ENCODE measurements at regions of chr1 and their contacts with region 1.

Region 1: GRCh38 chr1:152047730-152048402 is 11.1 kb upstream of the S100A11 start:
- DNase-seq: peak; percentile 64 to 94 (median 90)
- ATAC-seq: peak; percentile 89
- H3K4me3 ChIP-seq: peak overlapping the region; percentile 15 to 35
- H3K4me3 Mint-ChIP-seq: peak overlapping the region; percentile 68
- H3K27ac ChIP-seq: peak overlapping the region; percentile 54 to 97
- H3K27ac Mint-ChIP-seq: peak overlapping the region; percentile 98
- H3K4me1 ChIP-seq: peaks cover 20% of the 10 kb centered on the region
- H3K4me1 Mint-ChIP-seq: peaks cover 19% of the 10 kb centered on the region
- H3K27me3 ChIP-seq: no peaks in the 10 kb centered on the region
- H3K27me3 Mint-ChIP-seq: peaks cover 2% of the 10 kb centered on the region
- CTCF ChIP-seq: peak; percentile 43

Region 2: DNA sequence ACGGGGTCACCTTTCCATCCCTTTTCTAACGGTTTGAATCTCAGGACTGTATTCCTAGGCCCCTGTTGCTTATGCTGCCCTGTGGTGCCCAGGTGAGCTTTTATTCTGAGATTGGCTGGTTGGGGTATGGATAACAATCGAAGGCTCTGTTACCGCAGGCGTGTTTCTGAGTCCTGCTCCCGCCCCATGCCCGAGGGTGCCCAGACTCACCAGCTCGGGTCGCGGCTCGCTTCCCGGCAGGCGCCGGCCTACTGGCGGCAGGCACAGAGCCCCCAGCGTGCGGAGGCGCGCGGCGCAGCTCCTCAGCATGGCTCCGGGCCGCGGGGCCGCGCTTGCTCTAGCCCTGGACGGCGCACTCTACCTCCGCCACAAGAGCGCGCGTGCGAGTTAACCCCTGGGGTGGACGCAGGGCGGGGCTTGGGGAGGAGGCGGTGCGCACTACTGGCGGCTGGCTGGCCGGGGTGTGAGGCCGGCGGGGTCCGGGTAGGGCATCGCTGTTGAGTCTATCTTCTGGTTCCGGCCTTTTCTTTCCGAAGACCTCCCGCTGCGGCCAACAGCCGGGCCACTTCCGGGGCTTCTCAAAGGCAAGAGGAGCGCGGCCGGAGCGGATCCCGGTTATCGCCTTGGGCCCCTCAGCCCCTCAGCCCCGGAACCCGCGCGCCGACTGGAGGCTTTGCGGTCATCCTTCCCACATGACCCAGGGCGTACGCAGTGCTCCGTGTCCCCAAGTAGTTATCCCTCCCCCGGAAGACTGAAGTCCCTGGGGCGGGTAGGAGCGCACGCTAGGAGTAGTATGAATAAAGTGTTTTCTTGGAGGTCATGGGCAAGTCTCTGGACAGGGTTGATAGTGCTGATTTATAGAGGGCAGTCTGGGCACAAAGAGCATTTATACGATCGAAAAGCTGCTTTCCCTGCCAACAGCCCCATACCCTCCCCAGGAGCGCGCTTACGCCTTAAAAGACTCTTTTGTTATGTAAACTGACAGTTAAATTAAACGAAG is 138.4 kb before region 1 on chr1 and contains the start of gene THEM4:
- CTCF ChIA-PET with region 1: no interaction called
- POLR2A ChIA-PET with region 1: no interaction called
- intact Hi-C with region 1: loop called in 1 of 2 experiments (anchors 5 kb)
- DNase-seq: peak; percentile 83 to 96 (median 91)
- ATAC-seq: peak; percentile 82
- H3K4me3 ChIP-seq: peak within 1 kb of the TSS; percentile 60 to 75
- H3K4me3 Mint-ChIP-seq: peak within 1 kb of the TSS; percentile 83
- H3K27ac ChIP-seq: peak within 1 kb of the TSS; percentile 56 to 89
- H3K27ac Mint-ChIP-seq: peak within 1 kb of the TSS; percentile 85
- H3K4me1 ChIP-seq: peaks cover 49% of the 10 kb centered on the region
- H3K4me1 Mint-ChIP-seq: peaks cover 40% of the 10 kb centered on the region
- H3K27me3 ChIP-seq: no peaks in the 10 kb centered on the region
- H3K27me3 Mint-ChIP-seq: no peaks in the 10 kb centered on the region
- CTCF ChIP-seq: no peak
- total RNA-seq, gene THEM4: 14.3 to 16.8 TPM

Region 3: DNA sequence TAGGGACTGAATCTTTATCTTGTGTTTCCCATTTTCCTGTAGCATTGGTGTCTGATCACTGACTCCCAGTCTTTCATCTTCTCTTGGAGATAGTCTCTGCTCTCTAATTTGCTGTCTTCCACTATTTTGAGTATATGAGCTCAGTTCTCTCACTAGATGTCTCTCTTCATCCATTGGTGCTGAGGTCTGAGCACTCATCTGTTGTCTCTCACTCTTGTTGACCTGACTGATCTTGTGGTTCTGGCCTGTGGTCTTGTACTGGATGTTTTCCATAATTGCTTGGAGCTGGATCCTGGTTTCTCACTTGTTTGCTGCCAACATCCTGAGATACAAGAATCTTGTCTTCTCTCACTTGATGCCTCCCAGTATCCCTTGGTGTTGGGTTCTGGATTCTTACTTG is 14.1 kb after region 1 on chr1:
- CTCF ChIA-PET with region 1: interaction called, 36 read pairs
- POLR2A ChIA-PET with region 1: no interaction called
- intact Hi-C with region 1: no loop called
- DNase-seq: no peak
- ATAC-seq: no peak
- H3K4me3 ChIP-seq: no peak overlapping the region
- H3K4me3 Mint-ChIP-seq: no peak overlapping the region
- H3K27ac ChIP-seq: no peak overlapping the region
- H3K27ac Mint-ChIP-seq: no peak overlapping the region
- H3K4me1 ChIP-seq: no peaks in the 10 kb centered on the region
- H3K4me1 Mint-ChIP-seq: no peaks in the 10 kb centered on the region
- H3K27me3 ChIP-seq: peaks cover 0 to 2% of the 10 kb centered on the region in 2 experiments
- H3K27me3 Mint-ChIP-seq: peaks cover 21% of the 10 kb centered on the region
- CTCF ChIP-seq: no peak

Region 4: GRCh38 chr1:152096121-152096865 is 48.4 kb after region 1 on chr1:
- CTCF ChIA-PET with region 1: no interaction called
- POLR2A ChIA-PET with region 1: no interaction called
- intact Hi-C with region 1: no loop called
- DNase-seq: no peak
- ATAC-seq: no peak
- H3K4me3 ChIP-seq: no peak overlapping the region
- H3K4me3 Mint-ChIP-seq: no peak overlapping the region
- H3K27ac ChIP-seq: no peak overlapping the region
- H3K27ac Mint-ChIP-seq: no peak overlapping the region
- H3K4me1 ChIP-seq: no peaks in the 10 kb centered on the region
- H3K4me1 Mint-ChIP-seq: no peaks in the 10 kb centered on the region
- H3K27me3 ChIP-seq: peaks cover 0 to 5% of the 10 kb centered on the region in 2 experiments
- H3K27me3 Mint-ChIP-seq: peaks cover 42% of the 10 kb centered on the region
- CTCF ChIP-seq: no peak

Region 5: GRCh38 chr1:152189657-152190442 is 142.0 kb after region 1 on chr1:
- CTCF ChIA-PET with region 1: interaction called, 308 read pairs
- POLR2A ChIA-PET with region 1: interaction called, 5 read pairs
- intact Hi-C with region 1: loop called (anchors 1 kb)
- DNase-seq: peak; percentile 25 to 81 (median 67)
- ATAC-seq: peak; percentile 71
- H3K4me3 ChIP-seq: peak overlapping the region; percentile 78 to 87
- H3K4me3 Mint-ChIP-seq: peak overlapping the region; percentile 78
- H3K27ac ChIP-seq: no peak overlapping the region
- H3K27ac Mint-ChIP-seq: peak overlapping the region; percentile 34
- H3K4me1 ChIP-seq: no peaks in the 10 kb centered on the region
- H3K4me1 Mint-ChIP-seq: peaks cover 4% of the 10 kb centered on the region
- H3K27me3 ChIP-seq: no peaks in the 10 kb centered on the region
- H3K27me3 Mint-ChIP-seq: peaks cover 2% of the 10 kb centered on the region
- CTCF ChIP-seq: peak; percentile 87

Region 6: DNA sequence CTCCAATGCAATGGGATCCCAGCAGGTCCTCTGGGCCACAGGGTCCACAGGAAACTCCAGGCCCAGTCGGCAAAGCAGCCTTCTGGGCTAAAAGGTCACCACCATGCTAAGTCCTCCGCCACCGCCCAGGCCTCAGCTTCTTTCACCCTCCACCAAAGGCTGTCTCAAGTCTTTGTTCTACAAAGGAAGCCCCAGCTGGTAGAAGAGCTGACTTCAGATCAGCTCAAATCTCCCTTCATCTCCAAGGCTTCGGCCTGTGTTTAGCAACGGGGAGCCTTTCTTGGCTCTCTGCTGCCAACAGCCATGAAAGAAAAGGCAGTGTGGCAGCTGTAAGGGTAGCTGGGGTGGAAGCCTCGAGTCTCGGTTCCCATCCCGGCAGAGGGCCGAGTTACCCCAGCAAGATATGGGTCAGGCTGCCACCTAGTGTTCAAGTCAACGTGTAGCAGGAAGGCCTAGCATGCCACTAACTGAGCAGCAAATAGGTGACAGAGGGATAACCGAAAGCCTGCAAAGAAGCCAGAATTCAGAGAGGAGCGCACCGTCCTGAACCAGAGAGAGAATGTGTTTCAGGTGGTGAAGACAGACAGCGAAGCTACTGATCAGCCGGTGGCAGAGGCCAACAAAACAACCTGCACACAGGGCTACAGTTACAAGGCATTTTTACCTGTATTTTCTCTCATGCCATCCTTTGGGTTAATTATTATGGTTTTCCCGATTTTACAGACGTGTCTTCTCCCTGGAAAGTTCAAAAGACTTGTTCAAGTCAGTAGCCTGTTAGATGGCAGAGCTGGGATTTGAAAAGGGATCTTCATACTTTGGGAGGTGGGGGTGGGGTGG is 393.0 kb after region 1 on chr1:
- CTCF ChIA-PET with region 1: interaction called, 6 read pairs
- POLR2A ChIA-PET with region 1: no interaction called
- intact Hi-C with region 1: loop called (anchors 1 to 5 kb)
- DNase-seq: peak; percentile 35 to 82 (median 63)
- ATAC-seq: peak; percentile 95
- H3K4me3 ChIP-seq: no peak overlapping the region
- H3K4me3 Mint-ChIP-seq: no peak overlapping the region
- H3K27ac ChIP-seq: no peak overlapping the region
- H3K27ac Mint-ChIP-seq: no peak overlapping the region
- H3K4me1 ChIP-seq: no peaks in the 10 kb centered on the region
- H3K4me1 Mint-ChIP-seq: peaks cover 3% of the 10 kb centered on the region
- H3K27me3 ChIP-seq: no peaks in the 10 kb centered on the region
- H3K27me3 Mint-ChIP-seq: peaks cover 27% of the 10 kb centered on the region
- CTCF ChIP-seq: peak; percentile 75

Measured in CD8-positive, alpha-beta T cell (primary cell).